Activated CD4-positive, alpha-beta T cell treated with anti-CD3 and anti-CD28 coated beads for 36 hours (primary cell): ENCODE measurements at regions of chr2 and their contacts with region 1.

Region 1: DNA sequence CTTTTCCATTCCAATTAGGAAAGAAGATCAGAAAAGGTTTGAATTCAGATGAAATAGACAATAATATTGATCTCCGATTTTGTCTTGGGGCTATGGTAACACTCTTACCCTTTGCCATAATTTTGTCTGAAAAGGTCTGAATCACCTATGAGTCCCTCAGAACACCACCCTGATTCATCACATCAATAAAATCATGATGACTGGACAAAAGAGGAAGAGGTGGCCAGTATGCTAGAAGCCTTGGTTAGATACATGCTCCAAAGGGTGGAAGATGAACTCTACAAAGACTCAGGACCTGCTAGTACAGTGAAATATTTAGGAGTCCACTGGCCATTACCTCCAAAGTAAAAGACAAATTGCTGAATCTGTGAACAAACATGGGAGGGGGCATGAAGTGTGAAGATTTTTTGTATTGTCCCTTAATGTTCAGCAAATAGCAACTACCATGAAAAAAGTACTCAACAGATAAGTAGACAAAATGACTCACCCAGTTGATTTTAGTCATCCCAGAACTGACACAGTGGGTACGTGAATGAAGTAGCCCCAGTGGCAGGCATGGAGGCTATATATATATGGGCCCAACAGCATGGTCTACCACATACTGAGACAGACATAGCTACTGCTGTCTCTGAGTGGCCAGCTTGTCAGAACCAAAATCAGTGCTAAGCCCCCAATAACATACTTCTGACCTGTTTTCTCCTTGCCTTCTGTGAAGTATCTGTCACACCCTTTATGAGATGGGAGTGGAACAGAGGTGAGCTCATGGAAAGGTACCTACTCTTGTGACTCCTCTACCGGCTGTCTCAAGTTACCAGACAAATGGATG is 36.5 kb upstream of the GLS start:
- DNase-seq: peak; percentile 74
- ATAC-seq: peak; percentile 87
- H3K4me3 Mint-ChIP-seq: peak overlapping the region; percentile 43
- H3K27ac Mint-ChIP-seq: peak overlapping the region; percentile 82
- H3K4me1 Mint-ChIP-seq: peaks cover 45% of the 10 kb centered on the region
- H3K27me3 Mint-ChIP-seq: no peaks in the 10 kb centered on the region

Region 2: DNA sequence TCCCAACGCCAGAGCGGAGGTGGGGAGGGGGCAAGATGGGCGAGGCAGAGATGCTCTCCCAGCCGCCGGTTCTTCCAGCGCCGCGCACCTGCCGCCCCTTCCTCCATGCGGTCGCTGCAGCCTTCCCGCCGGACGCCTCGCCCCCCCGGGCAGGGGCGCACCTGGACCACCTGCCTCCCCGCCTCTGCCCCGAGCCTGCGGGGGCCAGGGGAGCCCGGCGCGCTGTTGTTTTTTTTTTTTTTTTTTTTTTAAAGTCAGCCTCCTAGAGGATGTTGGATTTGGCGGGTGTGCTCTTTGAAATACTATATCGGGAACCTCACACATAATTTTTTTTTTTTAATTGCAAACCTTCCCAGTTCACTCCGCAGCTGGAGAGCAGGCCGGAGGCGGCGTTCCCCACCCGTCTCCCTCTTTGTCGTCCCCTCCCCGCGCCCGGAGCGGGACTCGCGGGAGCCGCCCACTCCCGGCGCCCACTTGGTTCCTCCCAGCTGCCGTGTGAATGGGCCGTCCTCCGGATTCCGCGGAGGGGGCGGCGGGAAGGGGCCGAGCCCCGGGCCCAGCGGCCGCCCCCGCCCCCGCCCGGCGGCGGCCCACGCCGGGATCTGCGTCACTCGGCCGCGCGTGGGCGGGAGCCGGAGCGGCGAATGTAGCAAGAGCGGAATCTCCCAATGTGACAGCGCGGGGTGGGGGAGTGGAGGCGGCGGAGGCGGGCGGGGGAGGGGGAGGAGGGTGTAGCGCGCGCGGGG is 195.6 kb before region 1 on chr2:
- CTCF ChIA-PET with region 1: no interaction called
- POLR2A ChIA-PET with region 1: no interaction called
- intact Hi-C with region 1: loop called in 1 of 2 experiments (anchors 1 kb)
- DNase-seq: peak; percentile 88
- ATAC-seq: peak; percentile 54
- H3K4me3 Mint-ChIP-seq: peak overlapping the region; percentile 67
- H3K27ac Mint-ChIP-seq: peak overlapping the region; percentile 81
- H3K4me1 Mint-ChIP-seq: peaks cover 46% of the 10 kb centered on the region
- H3K27me3 Mint-ChIP-seq: no peaks in the 10 kb centered on the region

Region 3: GRCh38 chr2:190781604-190782198 is 62.4 kb before region 1 on chr2:
- CTCF ChIA-PET with region 1: interaction called, 4 read pairs
- POLR2A ChIA-PET with region 1: no interaction called
- intact Hi-C with region 1: loop called in 1 of 2 experiments (anchors 2 kb)
- DNase-seq: peak; percentile 77
- ATAC-seq: peak; percentile 58
- H3K4me3 Mint-ChIP-seq: no peak overlapping the region
- H3K27ac Mint-ChIP-seq: no peak overlapping the region
- H3K4me1 Mint-ChIP-seq: peaks cover 33% of the 10 kb centered on the region
- H3K27me3 Mint-ChIP-seq: no peaks in the 10 kb centered on the region

Region 4: DNA sequence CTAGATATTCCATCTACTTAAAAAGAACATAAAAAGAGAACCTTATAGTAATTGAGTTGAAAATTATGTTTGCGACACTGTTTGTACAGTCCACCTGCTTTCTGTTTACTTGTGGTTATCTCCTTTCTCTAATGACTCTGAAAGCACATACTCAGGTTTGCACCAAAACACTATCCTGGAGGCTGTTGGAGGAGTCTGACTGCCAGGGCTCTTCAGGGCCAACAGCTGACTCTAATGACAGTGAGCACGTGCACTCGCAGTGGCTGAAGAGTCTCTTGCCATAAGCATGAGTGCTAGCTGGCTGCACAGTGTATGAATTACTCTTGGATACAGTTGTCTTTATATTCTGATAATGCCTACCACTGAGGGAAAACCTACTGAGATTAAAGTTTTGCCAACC is 19.9 kb after region 1 on chr2:
- CTCF ChIA-PET with region 1: interaction called, 3 read pairs
- POLR2A ChIA-PET with region 1: no interaction called
- intact Hi-C with region 1: loop called in 1 of 2 experiments (anchors 1 kb)
- DNase-seq: no peak
- ATAC-seq: no peak
- H3K4me3 Mint-ChIP-seq: no peak overlapping the region
- H3K27ac Mint-ChIP-seq: no peak overlapping the region
- H3K4me1 Mint-ChIP-seq: peaks cover 26% of the 10 kb centered on the region
- H3K27me3 Mint-ChIP-seq: no peaks in the 10 kb centered on the region

Region 5: DNA sequence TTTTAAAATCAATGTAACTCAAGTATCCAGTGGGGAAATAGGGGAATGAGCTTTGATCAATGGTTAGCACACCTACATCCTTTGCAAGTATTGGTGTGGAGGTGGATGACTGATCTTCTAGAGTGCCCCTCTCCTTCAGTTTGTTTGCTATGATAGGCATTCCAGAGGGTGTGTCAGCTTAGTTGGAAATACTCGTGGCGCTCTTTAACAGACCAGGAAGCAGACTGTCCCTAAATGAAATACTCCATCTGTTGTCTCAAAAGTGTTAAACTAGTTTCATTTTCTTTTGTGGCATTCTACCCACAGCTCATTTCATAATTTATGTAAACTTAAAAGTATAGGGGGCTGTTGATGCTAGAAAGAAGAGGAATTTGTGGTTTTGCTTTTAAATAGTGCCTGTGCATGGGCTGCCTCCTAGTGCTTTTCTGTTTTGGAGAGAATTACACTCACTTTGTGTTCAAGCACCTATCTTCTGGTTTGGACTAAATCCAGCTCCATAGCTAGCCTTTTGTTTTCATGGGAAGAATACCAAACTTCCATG is 103.7 kb after region 1 on chr2:
- CTCF ChIA-PET with region 1: no interaction called
- POLR2A ChIA-PET with region 1: no interaction called
- intact Hi-C with region 1: loop called in 1 of 2 experiments (anchors 5 kb)
- DNase-seq: no peak
- ATAC-seq: peak; percentile 68
- H3K4me3 Mint-ChIP-seq: no peak overlapping the region
- H3K27ac Mint-ChIP-seq: peak overlapping the region; percentile 15
- H3K4me1 Mint-ChIP-seq: peaks cover 11% of the 10 kb centered on the region
- H3K27me3 Mint-ChIP-seq: no peaks in the 10 kb centered on the region

Region 6: DNA sequence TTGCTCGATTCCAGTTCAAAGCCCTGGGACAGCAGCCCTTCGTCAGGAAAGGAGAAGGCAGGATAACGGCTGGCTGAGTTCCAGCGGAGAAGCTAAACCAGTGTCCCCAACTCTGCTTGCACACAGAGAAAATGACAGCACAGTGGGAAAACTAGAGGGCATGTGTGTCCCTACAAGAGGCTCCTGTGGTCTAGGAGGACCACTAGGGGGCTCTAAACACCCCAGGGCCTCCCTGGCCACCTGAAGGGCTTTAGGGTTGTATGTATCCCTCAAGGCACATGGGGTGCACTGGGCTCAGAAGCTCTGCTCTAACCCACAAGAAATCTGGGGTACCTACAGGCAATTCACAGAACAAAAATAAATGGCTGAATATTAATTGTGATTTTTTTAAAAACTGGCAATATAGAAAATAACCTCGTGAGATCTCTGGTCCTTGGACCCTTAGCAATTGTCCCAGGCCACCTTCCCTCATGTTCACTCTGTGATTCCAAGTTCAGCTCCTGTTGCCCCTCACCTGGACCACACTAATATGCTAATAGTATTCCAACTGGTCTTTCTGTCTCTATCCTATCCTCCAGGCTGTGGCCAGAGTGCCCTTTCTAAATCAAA is 152.4 kb after region 1 on chr2:
- CTCF ChIA-PET with region 1: no interaction called
- POLR2A ChIA-PET with region 1: no interaction called
- intact Hi-C with region 1: no loop called
- DNase-seq: no peak
- ATAC-seq: no peak
- H3K4me3 Mint-ChIP-seq: no peak overlapping the region
- H3K27ac Mint-ChIP-seq: peak overlapping the region; percentile 69
- H3K4me1 Mint-ChIP-seq: peaks cover 47% of the 10 kb centered on the region
- H3K27me3 Mint-ChIP-seq: no peaks in the 10 kb centered on the region

Region 7: DNA sequence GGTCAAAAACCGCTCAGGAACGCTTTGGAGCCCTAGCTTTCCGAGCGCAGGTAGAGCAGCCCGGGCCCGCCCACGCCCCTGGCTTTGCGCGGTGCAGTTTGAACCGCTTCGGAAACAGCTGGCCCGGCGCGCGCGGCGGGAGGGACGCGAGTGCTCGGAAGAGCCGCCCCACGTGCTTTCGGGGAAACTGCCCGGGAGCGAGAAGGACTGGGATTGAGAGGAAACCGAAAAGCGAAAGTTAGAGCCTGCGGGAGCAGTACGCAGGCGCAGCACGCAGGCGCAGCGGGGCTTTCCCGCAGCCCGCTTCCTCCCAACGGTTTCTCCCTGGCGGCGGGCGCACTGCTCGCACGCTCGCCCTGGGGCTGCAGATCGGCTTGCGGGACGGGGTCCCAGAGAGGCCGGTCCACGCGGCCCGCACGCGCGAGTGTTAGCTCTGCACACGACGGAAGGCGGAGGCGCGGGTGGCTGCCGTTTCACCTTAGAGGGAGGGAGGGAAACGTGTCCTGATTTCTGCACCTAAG is 176.2 kb after region 1 on chr2:
- CTCF ChIA-PET with region 1: no interaction called
- POLR2A ChIA-PET with region 1: interaction called, 3 read pairs
- intact Hi-C with region 1: loop called (anchors 1 to 2 kb)
- DNase-seq: peak; percentile 96
- ATAC-seq: peak; percentile 62
- H3K4me3 Mint-ChIP-seq: no peak overlapping the region
- H3K27ac Mint-ChIP-seq: no peak overlapping the region
- H3K4me1 Mint-ChIP-seq: peaks cover 37% of the 10 kb centered on the region
- H3K27me3 Mint-ChIP-seq: no peaks in the 10 kb centered on the region

Region 8: GRCh38 chr2:191195021-191195420 is 350.9 kb after region 1 on chr2:
- CTCF ChIA-PET with region 1: no interaction called
- POLR2A ChIA-PET with region 1: interaction called, 3 read pairs
- intact Hi-C with region 1: loop called in 1 of 2 experiments (anchors 2 kb)
- DNase-seq: no peak
- ATAC-seq: no peak
- H3K4me3 Mint-ChIP-seq: no peak overlapping the region
- H3K27ac Mint-ChIP-seq: peak overlapping the region; percentile 98
- H3K4me1 Mint-ChIP-seq: peaks cover 57% of the 10 kb centered on the region
- H3K27me3 Mint-ChIP-seq: no peaks in the 10 kb centered on the region